ENCODE measurements at regions of chr10 and their contacts with region 1.

Region 1: GRCh38 chr10:7872041-7872442 is 53.7 kb downstream of the TAF3 start:
- DNase-seq: no peak
- ATAC-seq: no peak

Region 2: GRCh38 chr10:9209105-9209798 is 1337.2 kb after region 1 on chr10:
- intact Hi-C with region 1: loop called (anchors 5 kb)
- DNase-seq: peak; percentile 53
- ATAC-seq: no peak

Region 3: DNA sequence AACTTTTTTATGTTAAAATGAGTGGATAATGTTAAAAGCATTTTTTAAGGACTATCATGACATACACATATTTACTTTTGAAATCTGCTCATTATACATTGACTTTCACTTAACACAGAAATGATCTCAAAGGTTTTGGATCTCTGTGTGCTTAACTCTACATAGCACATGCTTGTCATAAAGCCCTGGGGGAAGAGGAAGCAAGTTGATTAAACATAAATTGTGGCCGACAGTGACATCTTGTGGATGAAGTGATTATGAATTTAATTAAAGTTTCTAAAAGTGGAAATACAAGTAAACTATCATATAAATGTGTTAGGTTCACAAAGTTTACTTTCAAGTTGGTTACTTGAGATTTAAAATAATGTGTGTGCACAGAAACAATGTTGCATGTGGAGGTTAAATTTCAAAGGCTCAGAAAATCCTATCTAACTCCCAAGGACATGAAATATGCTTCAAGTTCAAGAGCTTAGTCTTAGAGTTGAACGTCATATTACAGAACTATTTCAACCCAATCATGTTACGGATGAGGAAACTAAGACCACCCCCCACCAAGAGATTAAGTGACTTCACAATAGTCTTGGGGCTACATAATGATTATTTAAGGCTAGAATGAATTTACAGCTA is 1430.2 kb after region 1 on chr10:
- intact Hi-C with region 1: loop called (anchors 10 kb)
- DNase-seq: no peak
- ATAC-seq: no peak

Measured in left ventricle myocardium superior (tissue), 1 donor.